B cell (primary cell): ENCODE measurements at regions of chr15 and their contacts with region 1.

Region 1: DNA sequence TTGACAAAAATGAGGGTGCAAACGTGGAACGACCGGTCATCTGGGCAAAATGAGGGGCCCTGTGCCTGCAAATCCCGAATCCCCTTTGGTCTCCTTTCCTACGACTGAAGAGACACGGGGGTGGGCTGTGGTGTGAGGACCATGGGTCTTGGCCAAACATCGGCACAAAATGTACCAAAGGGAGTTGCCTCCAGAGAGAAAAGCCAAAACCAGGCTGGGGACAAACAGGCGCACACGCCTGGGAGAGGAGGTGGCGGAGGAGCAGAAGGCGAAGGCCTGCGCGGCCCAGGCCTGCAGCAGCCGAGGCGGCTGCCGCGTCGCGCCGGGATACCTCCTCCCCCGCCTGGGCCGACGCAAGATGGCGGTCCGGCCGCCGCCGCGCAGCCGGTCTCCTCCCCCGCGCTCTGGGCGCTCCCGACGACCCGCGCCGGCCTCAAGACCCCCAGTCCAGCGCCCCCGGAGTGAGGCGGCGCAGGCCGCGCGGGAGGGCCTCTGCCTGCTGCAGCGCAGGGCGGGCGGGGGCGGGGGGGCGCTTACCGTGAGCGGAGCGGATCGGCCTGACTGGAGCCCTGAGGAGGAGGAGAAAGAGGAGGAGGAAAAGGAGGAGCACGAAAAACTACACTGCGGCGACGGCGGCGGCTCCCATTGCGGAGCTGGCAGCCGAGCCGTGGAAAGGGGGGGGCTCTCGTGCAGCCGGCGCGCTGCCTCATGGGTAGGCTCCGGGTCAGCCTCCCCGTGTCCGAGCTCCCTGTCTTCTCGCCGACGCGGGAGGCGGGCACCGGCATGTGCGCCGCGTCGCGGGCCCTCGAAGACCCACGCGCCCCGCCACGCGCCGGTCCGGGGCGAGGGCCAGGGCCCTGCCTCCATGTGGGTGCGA is at the start of gene ZNF280D:
- DNase-seq: peak; percentile 86
- ATAC-seq: peak; percentile 84
- H3K4me3 ChIP-seq: peak within 1 kb of the TSS; percentile 65 to 92 (median 83)
- H3K4me3 Mint-ChIP-seq: peak within 1 kb of the TSS; percentile 94
- H3K27ac ChIP-seq: peak within 1 kb of the TSS; percentile 59 to 83
- H3K27ac Mint-ChIP-seq: peak within 1 kb of the TSS; percentile 92
- H3K4me1 ChIP-seq: peaks cover 24 to 25% of the 10 kb centered on the region in 2 donors
- H3K4me1 Mint-ChIP-seq: peaks cover 36% of the 10 kb centered on the region
- H3K27me3 ChIP-seq: no peaks in the 10 kb centered on the region
- H3K27me3 Mint-ChIP-seq: no peaks in the 10 kb centered on the region
- CTCF ChIP-seq: no peak
- total RNA-seq, gene ZNF280D: 63.7 and 68.3 TPM in 2 replicates

Region 2: GRCh38 chr15:56496635-56497034 is 236.5 kb before region 1 on chr15:
- CTCF ChIA-PET with region 1: interaction called, 6 read pairs
- POLR2A ChIA-PET with region 1: no interaction called
- intact Hi-C with region 1: loop called (anchors 1 kb)
- DNase-seq: peak; percentile 69
- ATAC-seq: peak; percentile 63
- H3K4me3 ChIP-seq: no peak overlapping the region
- H3K4me3 Mint-ChIP-seq: peak overlapping the region; percentile 24
- H3K27ac ChIP-seq: no peak overlapping the region
- H3K27ac Mint-ChIP-seq: no peak overlapping the region
- H3K4me1 ChIP-seq: peaks cover 0 to 3% of the 10 kb centered on the region in 2 donors
- H3K4me1 Mint-ChIP-seq: peaks cover 3% of the 10 kb centered on the region
- H3K27me3 ChIP-seq: no peaks in the 10 kb centered on the region
- H3K27me3 Mint-ChIP-seq: no peaks in the 10 kb centered on the region
- CTCF ChIP-seq: peak; percentile 84

Region 3: GRCh38 chr15:56719774-56720555 is 13.2 kb before region 1 on chr15:
- CTCF ChIA-PET with region 1: no interaction called
- POLR2A ChIA-PET with region 1: interaction called, 3 read pairs
- intact Hi-C with region 1: loop called (anchors 2 kb)
- DNase-seq: no peak
- ATAC-seq: no peak
- H3K4me3 ChIP-seq: no peak overlapping the region
- H3K4me3 Mint-ChIP-seq: peak overlapping the region; percentile 76
- H3K27ac ChIP-seq: peak overlapping the region in 1 of 2 donors; percentile 71
- H3K27ac Mint-ChIP-seq: peak overlapping the region; percentile 83
- H3K4me1 ChIP-seq: peaks cover 15 to 48% of the 10 kb centered on the region in 2 donors
- H3K4me1 Mint-ChIP-seq: peaks cover 70% of the 10 kb centered on the region
- H3K27me3 ChIP-seq: no peaks in the 10 kb centered on the region
- H3K27me3 Mint-ChIP-seq: no peaks in the 10 kb centered on the region
- CTCF ChIP-seq: no peak

Region 4: DNA sequence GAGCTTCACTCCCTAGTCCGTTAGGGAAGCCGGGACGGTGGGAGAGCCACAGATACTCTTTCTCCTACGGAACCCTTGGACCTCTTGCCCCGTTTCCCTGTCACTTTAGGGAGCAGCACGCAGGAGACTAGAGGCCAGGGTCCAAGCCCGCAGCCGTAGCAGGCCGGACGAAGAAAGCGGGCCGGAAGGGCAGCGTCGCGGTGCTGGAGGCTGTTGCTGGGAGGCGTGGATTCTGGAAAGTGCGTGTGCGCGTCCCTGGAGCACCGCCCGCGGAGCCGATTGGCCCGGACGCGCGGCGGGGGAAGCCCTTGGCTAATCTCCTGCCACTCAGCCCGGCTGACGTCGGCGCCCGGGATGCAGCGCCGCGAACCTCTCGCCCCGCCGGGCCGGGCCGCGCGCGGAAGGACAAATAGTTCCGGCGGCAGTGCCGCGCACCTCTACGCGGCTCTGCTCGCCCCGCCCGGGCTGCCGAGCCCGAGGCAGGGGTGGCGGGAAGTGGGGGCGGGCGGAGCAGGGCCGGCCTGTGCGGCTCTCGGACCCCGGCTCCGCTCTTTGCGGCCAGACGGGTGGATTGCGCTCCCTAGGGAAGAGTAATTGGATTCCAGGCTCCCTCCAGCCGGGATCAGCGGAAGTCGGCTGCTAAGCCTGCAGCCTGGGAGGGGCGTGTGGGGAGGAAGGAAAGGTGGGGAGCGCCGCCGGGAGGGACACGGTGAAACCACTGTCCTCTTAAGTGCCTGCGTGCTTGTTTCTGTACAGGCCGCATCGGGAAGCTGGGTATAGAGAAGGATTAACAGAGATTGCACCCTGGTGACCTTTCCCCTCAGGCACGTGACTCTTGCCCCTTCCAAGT is 154.0 kb after region 1 on chr15:
- CTCF ChIA-PET with region 1: no interaction called
- POLR2A ChIA-PET with region 1: interaction called, 3 read pairs
- intact Hi-C with region 1: loop called (anchors 5 kb)
- DNase-seq: peak; percentile 91
- ATAC-seq: peak; percentile 80
- H3K4me3 ChIP-seq: peak overlapping the region; percentile 78 to 85 (median 78)
- H3K4me3 Mint-ChIP-seq: peak overlapping the region; percentile 92
- H3K27ac ChIP-seq: peak overlapping the region; percentile 85 to 95
- H3K27ac Mint-ChIP-seq: peak overlapping the region; percentile 95
- H3K4me1 ChIP-seq: peaks cover 24 to 27% of the 10 kb centered on the region in 2 donors
- H3K4me1 Mint-ChIP-seq: peaks cover 35% of the 10 kb centered on the region
- H3K27me3 ChIP-seq: no peaks in the 10 kb centered on the region
- H3K27me3 Mint-ChIP-seq: no peaks in the 10 kb centered on the region
- CTCF ChIP-seq: no peak

Region 5: GRCh38 chr15:57706405-57707209 is 973.4 kb after region 1 on chr15 and contains the start of gene POLR2M:
- CTCF ChIA-PET with region 1: no interaction called
- POLR2A ChIA-PET with region 1: no interaction called
- intact Hi-C with region 1: loop called (anchors 2 kb)
- DNase-seq: peak; percentile 95
- ATAC-seq: peak; percentile 89
- H3K4me3 ChIP-seq: peak within 1 kb of the TSS; percentile 86 to 95 (median 88)
- H3K4me3 Mint-ChIP-seq: peak within 1 kb of the TSS; percentile 88
- H3K27ac ChIP-seq: peak within 1 kb of the TSS; percentile 86 to 95
- H3K27ac Mint-ChIP-seq: peak within 1 kb of the TSS; percentile 85
- H3K4me1 ChIP-seq: peaks cover 17 to 20% of the 10 kb centered on the region in 2 donors
- H3K4me1 Mint-ChIP-seq: peaks cover 45% of the 10 kb centered on the region
- H3K27me3 ChIP-seq: no peaks in the 10 kb centered on the region
- H3K27me3 Mint-ChIP-seq: peaks cover 14% of the 10 kb centered on the region
- CTCF ChIP-seq: no peak
- total RNA-seq, gene POLR2M: 67.4 and 73.2 TPM in 2 replicates